Gastrocnemius medialis (tissue), 4 donors: ENCODE measurements at regions of chr12 and their contacts with region 1.

Region 1: DNA sequence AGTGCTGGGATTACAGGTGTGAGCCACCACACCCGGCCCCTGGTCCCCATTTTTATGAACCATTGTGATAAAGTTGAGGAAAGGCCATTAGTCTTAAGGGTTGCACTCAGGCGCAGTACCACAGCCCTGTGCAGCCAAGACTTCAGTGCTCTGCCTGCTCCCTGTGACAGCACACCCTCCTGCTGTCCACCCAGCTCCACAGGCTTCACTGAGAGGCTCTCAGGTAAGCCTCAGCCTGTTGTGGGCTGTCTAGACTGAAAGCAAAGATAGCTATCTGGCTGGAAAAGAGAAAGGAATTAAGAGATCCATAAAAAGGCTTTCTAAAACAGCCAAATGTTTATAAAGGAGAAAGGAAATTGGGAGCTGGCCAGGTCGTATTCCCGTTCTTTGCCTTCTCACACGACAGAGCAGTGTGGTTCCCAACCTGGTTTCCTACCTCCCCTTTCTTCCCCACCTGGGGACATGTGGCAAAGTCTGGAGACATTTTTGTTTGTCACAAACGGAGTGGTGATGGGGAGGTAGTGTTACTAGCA is 19.1 kb upstream of the DNM1L start:
- DNase-seq: no peak
- ATAC-seq: peak in 1 of 2 donors; percentile 7
- H3K4me3 ChIP-seq: peak overlapping the region in 1 of 4 donors; percentile 9
- H3K27ac ChIP-seq: peak overlapping the region; percentile 81 to 93 (median 87)
- H3K4me1 ChIP-seq: peaks cover 19 to 23% of the 10 kb centered on the region in 2 donors
- H3K27me3 ChIP-seq: no peaks in the 10 kb centered on the region
- CTCF ChIP-seq: no peak
- POLR2A ChIP-seq: no peak

Region 2: GRCh38 chr12:32399337-32400113 is 260.4 kb before region 1 on chr12 and contains the start of gene FGD4:
- in situ Hi-C with region 1: no loop called
- intact Hi-C with region 1: loop called (anchors 5 kb)
- DNase-seq: peak; percentile 87 to 91
- ATAC-seq: peak; percentile 93 to 94
- H3K4me3 ChIP-seq: peak within 1 kb of the TSS; percentile 65 to 95 (median 82)
- H3K27ac ChIP-seq: peak within 1 kb of the TSS; percentile 63 to 86 (median 86)
- H3K4me1 ChIP-seq: peaks cover 4 to 16% of the 10 kb centered on the region in 2 donors
- H3K27me3 ChIP-seq: no peaks in the 10 kb centered on the region
- CTCF ChIP-seq: peak in 4 of 5 experiments; percentile 19 to 54 (median 46)
- POLR2A ChIP-seq: peak; percentile 76 to 83
- total RNA-seq, gene FGD4: 18.8 to 60.3 (median 40.8) TPM

Region 3: DNA sequence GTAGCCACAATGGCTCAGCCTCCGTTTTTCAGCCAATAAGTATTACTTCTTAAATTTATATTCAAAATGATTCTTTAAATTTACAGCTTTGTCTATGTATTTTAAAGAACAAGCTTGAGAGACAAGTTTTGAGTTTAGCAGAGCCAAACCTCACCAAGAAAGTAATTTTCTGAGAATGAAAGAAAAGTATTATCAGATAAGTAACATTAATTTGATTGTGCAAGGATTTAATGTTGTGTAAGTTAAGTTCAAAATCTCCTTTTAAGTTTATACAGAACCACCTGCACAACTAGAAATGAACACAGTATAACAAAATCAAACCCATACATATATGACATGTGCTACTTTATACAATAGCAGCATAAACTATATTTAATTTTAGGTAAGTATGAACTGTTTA is 716.2 kb after region 1 on chr12:
- in situ Hi-C with region 1: no loop called
- intact Hi-C with region 1: no loop called
- DNase-seq: no peak
- ATAC-seq: no peak
- H3K4me3 ChIP-seq: no peak overlapping the region
- H3K27ac ChIP-seq: no peak overlapping the region
- H3K4me1 ChIP-seq: no peaks in the 10 kb centered on the region
- H3K27me3 ChIP-seq: no peaks in the 10 kb centered on the region
- CTCF ChIP-seq: no peak
- POLR2A ChIP-seq: no peak